CD8-positive, alpha-beta T cell (primary cell): ENCODE measurements at regions of chr6 and their contacts with region 1.

Region 1: DNA sequence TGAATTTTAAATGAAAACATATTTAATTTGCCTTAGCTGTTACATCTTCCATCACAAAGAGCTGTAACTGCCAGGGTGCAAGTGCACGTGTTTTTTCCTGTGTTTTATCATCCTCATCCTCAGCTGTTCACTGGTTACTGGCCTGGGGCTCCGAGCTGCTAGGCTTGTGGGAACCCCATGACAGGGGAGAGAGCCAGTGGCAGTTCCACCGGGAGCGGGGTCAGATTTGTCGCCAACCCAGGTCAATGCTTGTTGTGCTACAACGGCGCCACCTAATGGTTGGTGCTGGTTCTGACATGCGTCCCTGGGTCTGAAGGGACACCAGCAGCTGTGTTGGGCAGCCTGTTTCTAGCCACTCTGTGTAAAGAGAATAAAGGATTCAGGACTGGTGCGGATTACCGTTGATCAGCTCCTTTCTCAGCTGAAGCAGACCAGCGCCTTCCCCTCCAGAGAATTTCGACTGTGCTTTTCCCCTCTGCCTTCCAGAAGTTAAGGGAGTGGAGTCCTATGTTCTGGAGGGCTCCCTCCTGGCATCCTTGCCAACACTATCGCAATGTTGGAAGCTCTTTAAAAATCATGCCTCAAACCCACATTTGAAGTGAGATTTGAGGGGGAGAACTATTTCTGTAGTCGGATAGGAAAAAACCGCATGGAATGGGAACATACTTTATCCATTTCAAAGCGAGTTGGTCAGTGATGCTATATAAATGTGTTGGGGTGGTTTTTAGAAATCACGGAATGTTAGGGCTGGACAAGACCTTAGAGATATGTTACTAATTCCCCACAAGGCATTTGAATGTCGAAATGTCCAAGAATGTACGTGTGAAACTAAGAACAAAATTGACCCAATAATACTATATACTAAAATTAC is 32.1 kb downstream of the SUMO4 start:
- DNase-seq: peak; percentile 80 to 94 (median 87)
- ATAC-seq: peak; percentile 97
- H3K4me3 ChIP-seq: no peak overlapping the region
- H3K4me3 Mint-ChIP-seq: peak overlapping the region; percentile 74
- H3K27ac ChIP-seq: no peak overlapping the region
- H3K27ac Mint-ChIP-seq: no peak overlapping the region
- H3K4me1 ChIP-seq: no peaks in the 10 kb centered on the region
- H3K4me1 Mint-ChIP-seq: peaks cover 7% of the 10 kb centered on the region
- H3K27me3 ChIP-seq: no peaks in the 10 kb centered on the region
- H3K27me3 Mint-ChIP-seq: no peaks in the 10 kb centered on the region
- CTCF ChIP-seq: peak; percentile 99

Region 2: GRCh38 chr6:149028767-149029405 is 403.3 kb before region 1 on chr6:
- CTCF ChIA-PET with region 1: interaction called, 271 read pairs
- POLR2A ChIA-PET with region 1: interaction called, 4 read pairs
- intact Hi-C with region 1: loop called (anchors 1 kb)
- DNase-seq: peak; percentile 16 to 88 (median 68)
- ATAC-seq: peak; percentile 70
- H3K4me3 ChIP-seq: no peak overlapping the region
- H3K4me3 Mint-ChIP-seq: no peak overlapping the region
- H3K27ac ChIP-seq: no peak overlapping the region
- H3K27ac Mint-ChIP-seq: no peak overlapping the region
- H3K4me1 ChIP-seq: no peaks in the 10 kb centered on the region
- H3K4me1 Mint-ChIP-seq: peaks cover 25% of the 10 kb centered on the region
- H3K27me3 ChIP-seq: no peaks in the 10 kb centered on the region
- H3K27me3 Mint-ChIP-seq: no peaks in the 10 kb centered on the region
- CTCF ChIP-seq: peak; percentile 91

Region 3: DNA sequence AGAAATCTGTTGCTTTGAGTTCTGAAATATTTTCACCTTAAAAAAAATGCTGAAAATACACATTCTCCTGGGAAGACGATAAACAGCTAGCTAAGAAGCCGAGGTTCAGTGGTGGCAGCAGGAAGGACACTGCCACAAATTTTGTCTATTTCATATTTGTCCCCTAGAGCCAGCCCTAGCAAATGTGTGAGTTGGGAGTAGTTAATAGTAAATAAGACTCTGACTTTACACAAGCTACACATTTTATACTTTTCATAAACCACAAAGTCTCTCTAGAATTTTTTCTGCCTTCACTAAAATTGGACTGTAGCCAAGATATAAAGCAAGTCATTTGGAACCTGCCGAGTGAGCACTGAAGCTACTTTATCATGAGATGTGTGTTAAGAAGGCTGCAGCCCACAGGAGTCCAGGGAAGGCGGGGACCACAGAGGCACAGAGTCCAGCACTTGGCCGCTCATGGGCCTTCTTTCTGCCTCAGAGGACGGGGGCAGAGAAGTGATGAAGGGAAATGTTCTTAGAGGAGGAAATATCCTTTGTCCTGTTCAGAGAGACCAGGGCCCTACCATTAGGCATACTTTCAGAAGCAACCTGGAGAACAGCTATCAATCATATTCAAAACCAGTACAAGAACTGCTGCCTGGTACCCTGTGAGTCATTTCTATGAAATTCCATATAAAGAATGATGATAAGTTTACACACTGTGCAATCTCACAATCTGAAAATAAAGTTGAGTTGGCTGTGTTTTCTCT is 356.4 kb before region 1 on chr6:
- CTCF ChIA-PET with region 1: interaction called, 32 read pairs
- POLR2A ChIA-PET with region 1: no interaction called
- intact Hi-C with region 1: no loop called
- DNase-seq: no peak
- ATAC-seq: no peak
- H3K4me3 ChIP-seq: no peak overlapping the region
- H3K4me3 Mint-ChIP-seq: no peak overlapping the region
- H3K27ac ChIP-seq: no peak overlapping the region
- H3K27ac Mint-ChIP-seq: peak overlapping the region; percentile 49
- H3K4me1 ChIP-seq: peaks cover 5% of the 10 kb centered on the region
- H3K4me1 Mint-ChIP-seq: peaks cover 8% of the 10 kb centered on the region
- H3K27me3 ChIP-seq: no peaks in the 10 kb centered on the region
- H3K27me3 Mint-ChIP-seq: no peaks in the 10 kb centered on the region
- CTCF ChIP-seq: no peak

Region 4: DNA sequence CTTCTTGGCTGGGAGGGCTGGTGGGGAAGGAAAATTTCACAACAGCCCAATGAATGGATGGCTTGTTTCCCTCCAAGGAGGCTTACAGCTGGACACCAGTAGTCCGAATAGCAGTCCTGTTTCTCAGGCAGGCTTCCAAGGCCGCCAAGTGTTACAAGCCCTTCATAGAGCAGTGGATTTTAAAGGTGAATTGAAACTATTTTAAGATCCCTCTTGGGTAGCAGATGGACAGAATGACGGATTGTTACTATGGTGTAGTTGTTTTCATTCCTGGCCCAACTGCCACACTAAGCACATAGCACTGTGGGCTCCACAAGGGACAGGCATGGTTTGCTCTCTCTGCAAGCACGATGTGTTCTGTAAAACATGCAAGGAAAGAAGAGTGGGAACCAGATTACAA is 318.0 kb before region 1 on chr6:
- CTCF ChIA-PET with region 1: interaction called, 10 read pairs
- POLR2A ChIA-PET with region 1: no interaction called
- intact Hi-C with region 1: no loop called
- DNase-seq: no peak
- ATAC-seq: no peak
- H3K4me3 ChIP-seq: no peak overlapping the region
- H3K4me3 Mint-ChIP-seq: no peak overlapping the region
- H3K27ac ChIP-seq: no peak overlapping the region
- H3K27ac Mint-ChIP-seq: no peak overlapping the region
- H3K4me1 ChIP-seq: peaks cover 5% of the 10 kb centered on the region
- H3K4me1 Mint-ChIP-seq: peaks cover 32% of the 10 kb centered on the region
- H3K27me3 ChIP-seq: no peaks in the 10 kb centered on the region
- H3K27me3 Mint-ChIP-seq: no peaks in the 10 kb centered on the region
- CTCF ChIP-seq: no peak

Region 5: GRCh38 chr6:149316798-149317655 is 115.1 kb before region 1 on chr6:
- CTCF ChIA-PET with region 1: interaction called, 11 read pairs
- POLR2A ChIA-PET with region 1: interaction called, 3 read pairs
- intact Hi-C with region 1: no loop called
- DNase-seq: peak; percentile 77 to 96 (median 87)
- ATAC-seq: peak; percentile 70
- H3K4me3 ChIP-seq: peak overlapping the region; percentile 71 to 78
- H3K4me3 Mint-ChIP-seq: peak overlapping the region; percentile 89
- H3K27ac ChIP-seq: peak overlapping the region; percentile 75 to 87
- H3K27ac Mint-ChIP-seq: peak overlapping the region; percentile 88
- H3K4me1 ChIP-seq: peaks cover 32% of the 10 kb centered on the region
- H3K4me1 Mint-ChIP-seq: peaks cover 39% of the 10 kb centered on the region
- H3K27me3 ChIP-seq: no peaks in the 10 kb centered on the region
- H3K27me3 Mint-ChIP-seq: no peaks in the 10 kb centered on the region
- CTCF ChIP-seq: no peak

Region 6: GRCh38 chr6:149499066-149499465 is 66.9 kb after region 1 on chr6:
- CTCF ChIA-PET with region 1: interaction called, 10 read pairs
- POLR2A ChIA-PET with region 1: no interaction called
- intact Hi-C with region 1: no loop called
- DNase-seq: no peak
- ATAC-seq: no peak
- H3K4me3 ChIP-seq: no peak overlapping the region
- H3K4me3 Mint-ChIP-seq: no peak overlapping the region
- H3K27ac ChIP-seq: no peak overlapping the region
- H3K27ac Mint-ChIP-seq: peak overlapping the region; percentile 50
- H3K4me1 ChIP-seq: peaks cover 24% of the 10 kb centered on the region
- H3K4me1 Mint-ChIP-seq: peaks cover 38% of the 10 kb centered on the region
- H3K27me3 ChIP-seq: no peaks in the 10 kb centered on the region
- H3K27me3 Mint-ChIP-seq: no peaks in the 10 kb centered on the region
- CTCF ChIP-seq: no peak